Panc1 (cell line): ENCODE measurements at regions of chr3 and their contacts with region 1.

Region 1: DNA sequence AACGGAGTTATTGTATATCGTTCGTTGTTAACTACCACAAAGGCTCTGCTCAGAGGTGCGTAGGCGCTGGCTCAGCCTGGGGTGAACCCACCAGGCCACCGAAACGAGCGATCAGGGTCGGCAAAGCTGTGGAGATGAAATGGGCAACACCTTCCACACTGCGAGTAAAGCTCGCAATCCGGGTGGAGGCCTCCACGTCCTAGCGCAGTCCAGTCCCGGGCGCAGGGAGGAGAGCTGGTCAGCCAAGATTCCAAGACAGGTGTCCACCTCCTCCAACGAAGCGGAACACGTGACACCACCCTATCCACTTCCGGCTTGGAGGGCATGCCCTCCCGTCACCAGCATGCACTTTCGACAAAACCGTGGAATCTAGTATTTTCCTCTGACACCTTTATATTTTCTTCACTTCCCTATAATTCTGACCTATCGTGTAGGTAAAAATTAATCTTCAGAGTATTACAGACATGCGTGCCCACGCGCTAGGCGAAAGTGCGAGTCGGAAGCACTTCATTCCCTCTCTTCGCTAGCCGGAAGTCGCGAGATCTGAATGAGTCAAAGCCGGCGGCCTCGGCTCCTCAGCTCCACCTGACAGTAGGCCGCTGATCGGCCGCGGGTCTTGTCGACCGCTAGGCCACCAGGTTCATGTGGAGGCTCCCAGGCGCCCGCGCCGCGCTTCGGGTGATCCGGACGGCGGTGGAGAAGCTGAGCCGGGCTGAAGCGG is at the start of gene PDE12:
- DNase-seq: peak; percentile 88
- ATAC-seq: peak; percentile 91
- H3K4me3 ChIP-seq: peak within 1 kb of the TSS; percentile 67 to 85
- H3K27ac ChIP-seq: peak within 1 kb of the TSS; percentile 97
- H3K4me1 ChIP-seq: peaks cover 4% of the 10 kb centered on the region; the same call in 1 of the 2 replicates
- H3K27me3 ChIP-seq: no peaks in the 10 kb centered on the region
- CTCF ChIP-seq: no peak
- total RNA-seq, gene PDE12: 22.8 TPM

Region 2: DNA sequence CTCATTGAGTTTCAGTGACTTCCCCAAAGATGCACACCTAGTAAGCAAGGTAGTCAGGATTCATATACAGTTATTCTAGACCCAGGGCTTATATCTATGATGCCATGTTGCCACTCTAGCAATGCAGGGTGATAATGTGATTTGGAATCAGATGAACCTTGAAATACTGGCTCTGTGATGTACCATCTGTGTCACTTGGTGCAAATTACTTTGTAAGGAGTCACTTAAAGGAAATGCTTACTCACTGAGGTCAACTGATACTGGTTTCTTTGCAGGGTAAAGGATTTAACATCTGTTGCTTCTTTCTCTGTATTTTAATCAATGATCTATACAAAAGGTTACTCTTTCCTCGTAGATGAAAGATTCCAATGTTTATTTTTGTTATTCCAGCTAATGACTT is 274.2 kb before region 1 on chr3:
- CTCF ChIA-PET with region 1: no interaction called
- POLR2A ChIA-PET with region 1: no interaction called
- in situ Hi-C with region 1: no loop called
- intact Hi-C with region 1: no loop called
- DNase-seq: no peak
- ATAC-seq: no peak
- H3K4me3 ChIP-seq: no peak overlapping the region
- H3K27ac ChIP-seq: no peak overlapping the region
- H3K4me1 ChIP-seq: no peaks in the 10 kb centered on the region
- H3K27me3 ChIP-seq: no peaks in the 10 kb centered on the region
- CTCF ChIP-seq: no peak

Region 3: DNA sequence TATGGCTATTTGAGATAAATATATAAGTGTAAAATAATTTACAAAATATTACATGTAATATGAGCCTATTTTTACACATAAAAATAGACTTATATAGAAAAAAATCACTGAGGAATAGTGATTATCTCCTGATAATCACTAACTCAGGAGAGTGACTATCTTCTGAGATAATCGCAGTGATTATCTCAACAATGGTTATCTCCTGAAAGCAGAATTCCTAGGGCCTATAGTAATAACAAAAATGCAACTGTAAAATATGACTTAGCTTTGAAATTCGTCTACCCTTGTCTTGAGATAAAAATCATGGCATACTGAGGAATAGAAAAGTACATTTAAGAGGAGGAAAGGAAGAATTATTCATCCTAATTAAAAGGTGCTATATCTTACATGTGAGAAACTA is 146.4 kb before region 1 on chr3:
- CTCF ChIA-PET with region 1: no interaction called
- POLR2A ChIA-PET with region 1: no interaction called
- in situ Hi-C with region 1: no loop called
- intact Hi-C with region 1: loop called (anchors 10 kb)
- DNase-seq: no peak
- ATAC-seq: no peak
- H3K4me3 ChIP-seq: no peak overlapping the region
- H3K27ac ChIP-seq: no peak overlapping the region
- H3K4me1 ChIP-seq: no peaks in the 10 kb centered on the region
- H3K27me3 ChIP-seq: no peaks in the 10 kb centered on the region
- CTCF ChIP-seq: no peak